Cardiac septum (tissue), 1 donor: ENCODE measurements at regions of chr6 and their contacts with region 1.

Region 1: DNA sequence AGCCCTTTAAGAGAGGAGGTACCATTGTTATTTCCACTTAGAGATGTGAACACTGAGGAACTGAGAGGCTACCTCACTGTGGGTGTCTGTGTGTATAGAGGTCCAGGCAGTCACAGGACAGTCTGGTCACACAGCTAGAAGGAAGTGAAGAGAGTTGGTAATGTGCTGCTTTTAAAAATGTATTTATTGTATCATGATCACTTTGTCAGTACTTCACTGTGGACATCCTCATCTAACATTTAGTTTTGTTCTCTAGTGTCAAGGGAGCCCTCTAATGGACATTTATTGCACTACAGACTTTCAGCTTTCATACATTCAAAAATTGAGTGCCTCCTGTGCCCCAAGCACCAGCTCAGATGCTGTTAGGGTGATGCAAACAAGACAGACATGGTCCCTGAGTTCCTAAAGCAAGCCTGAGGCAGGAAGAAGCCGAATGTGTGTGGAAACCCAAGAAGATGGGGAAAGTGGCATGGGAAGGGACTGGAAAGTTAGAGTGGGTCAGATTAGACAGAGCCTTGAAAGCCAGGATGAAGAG is 123.0 kb downstream of the SLC16A10 start:
- DNase-seq: no peak

Region 2: DNA sequence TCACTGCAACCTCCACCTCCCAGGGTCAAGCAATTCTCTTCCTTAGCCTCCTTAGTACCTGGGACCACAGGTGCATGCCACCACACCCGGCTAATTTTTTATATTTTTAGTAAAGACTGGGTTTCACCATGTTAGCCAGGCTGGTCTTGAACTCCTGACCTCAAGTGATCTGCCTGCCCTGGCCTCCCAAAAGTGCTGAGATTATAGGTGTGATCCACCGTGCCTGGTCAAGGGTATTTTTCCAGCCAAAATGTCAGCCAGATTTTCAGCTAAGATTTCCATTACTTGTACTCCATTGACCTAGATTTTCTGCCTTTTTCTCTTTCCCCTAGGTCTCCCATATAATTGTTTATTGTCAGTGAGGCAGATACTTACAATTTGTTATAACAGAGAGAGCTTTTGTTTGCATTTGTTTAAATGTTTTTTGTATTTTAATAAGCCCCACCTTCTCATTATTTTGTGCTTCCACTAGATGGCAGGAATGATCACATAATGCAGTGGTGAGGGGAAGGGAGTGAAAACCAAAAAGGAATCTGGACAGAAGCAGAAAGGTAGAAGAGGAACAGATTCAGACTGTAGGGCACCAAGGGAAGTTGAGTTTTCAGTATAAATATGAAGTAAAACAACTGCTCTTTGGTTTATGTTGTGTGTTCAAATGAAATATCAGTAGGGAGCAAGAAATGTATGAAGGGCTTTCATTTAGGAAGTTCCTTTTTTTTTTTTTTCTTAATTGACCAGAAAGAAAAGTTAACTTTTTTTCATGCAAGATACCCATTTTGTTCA is 198.7 kb before region 1 on chr6:
- intact Hi-C with region 1: loop called (anchors 5 kb)
- DNase-seq: no peak

Region 3: GRCh38 chr6:111030008-111031007 is 180.0 kb before region 1 on chr6:
- intact Hi-C with region 1: loop called (anchors 2 kb)
- DNase-seq: no peak

Region 4: DNA sequence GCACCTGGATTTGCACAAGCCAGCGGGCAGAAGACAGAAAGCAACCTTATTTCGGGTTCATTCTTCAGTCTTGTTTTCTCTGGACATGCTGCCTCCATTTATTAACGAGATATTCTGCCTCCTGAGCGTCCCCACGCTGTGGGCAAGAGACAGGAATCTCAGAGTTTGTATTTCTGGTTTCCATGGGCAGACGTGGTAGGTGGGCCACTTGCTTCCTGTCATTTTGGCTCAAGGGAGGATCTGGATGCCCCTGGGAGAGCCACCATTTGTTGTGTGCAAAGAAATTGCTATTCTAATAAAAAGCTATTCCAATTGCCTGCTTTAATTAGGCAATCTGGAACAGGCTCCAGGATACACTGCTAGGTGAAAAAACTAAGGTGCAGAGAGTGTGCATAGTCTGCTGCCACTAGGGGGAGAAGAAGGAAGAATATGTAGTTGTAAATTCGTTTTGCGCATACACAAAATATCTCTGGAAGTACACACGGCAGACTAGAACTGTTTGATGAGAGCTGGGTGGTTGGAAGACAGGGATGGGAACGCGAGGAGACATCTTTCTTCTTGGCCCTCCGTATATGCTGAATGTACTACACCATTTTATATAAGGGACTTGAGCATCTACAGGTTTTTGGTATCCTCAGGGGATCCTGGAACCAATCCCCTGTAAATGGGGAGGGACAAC is 153.0 kb before region 1 on chr6:
- intact Hi-C with region 1: loop called (anchors 5 kb)
- DNase-seq: no peak

Region 5: GRCh38 chr6:111342913-111343312 is 132.7 kb after region 1 on chr6:
- intact Hi-C with region 1: no loop called
- DNase-seq: no peak

Region 6: DNA sequence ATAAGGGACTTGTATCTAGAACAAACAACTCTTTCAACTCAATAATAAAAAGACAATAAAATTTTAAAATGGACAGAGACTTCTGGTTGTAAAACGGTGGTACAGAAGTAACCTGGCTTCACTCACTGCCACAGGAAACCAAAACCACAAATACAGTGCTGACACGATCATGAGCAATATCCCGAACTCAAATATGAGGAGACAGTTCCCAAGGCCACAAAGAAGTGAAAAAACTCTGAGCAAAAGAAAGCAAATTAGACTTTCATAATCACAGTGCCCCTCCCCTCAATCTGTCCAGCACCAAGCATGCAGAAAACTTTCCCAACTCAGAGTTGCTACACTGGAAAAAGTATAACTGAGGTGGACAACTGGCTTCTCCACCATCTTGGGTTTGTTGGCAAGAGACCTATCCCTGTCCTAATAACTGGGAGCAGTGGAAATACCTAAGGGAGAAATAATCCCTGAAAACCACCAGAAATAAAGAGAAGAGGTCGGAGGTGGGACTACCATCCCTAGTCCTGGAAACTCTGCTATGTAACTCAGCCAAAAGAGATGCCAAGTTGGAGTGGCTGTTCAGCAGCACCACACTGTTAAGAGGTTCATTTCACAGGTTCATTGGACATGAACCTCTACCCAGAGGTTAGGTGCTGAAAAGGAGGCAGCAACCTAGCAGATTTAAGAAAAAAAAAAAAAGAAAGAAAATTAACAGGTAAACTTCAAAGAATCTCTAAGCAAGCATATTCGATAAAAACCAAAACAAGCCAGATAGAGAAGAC is 217.3 kb after region 1 on chr6:
- intact Hi-C with region 1: no loop called
- DNase-seq: no peak